Gastrocnemius medialis (tissue), 4 donors: ENCODE measurements at regions of chr22 and their contacts with region 1.

Region 1: GRCh38 chr22:50030297-50031188 is 18.0 kb upstream of the IL17REL start:
- DNase-seq: peak; percentile 22 to 54
- ATAC-seq: peak; percentile 77 to 86
- H3K4me3 ChIP-seq: no peak overlapping the region
- H3K27ac ChIP-seq: no peak overlapping the region
- H3K4me1 ChIP-seq: no peaks in the 10 kb centered on the region
- H3K27me3 ChIP-seq: peaks cover 5 to 35% (median 20%) of the 10 kb centered on the region in 3 donors
- CTCF ChIP-seq: peak; percentile 81 to 93 (median 92)
- POLR2A ChIP-seq: no peak

Region 2: GRCh38 chr22:49767355-49768062 is 263.0 kb before region 1 on chr22:
- in situ Hi-C with region 1: loop called in 3 of 4 experiments (anchors 25 kb)
- intact Hi-C with region 1: loop called (anchors 1 kb)
- DNase-seq: peak in 1 of 2 donors; percentile 25
- ATAC-seq: peak in 1 of 2 donors; percentile 50
- H3K4me3 ChIP-seq: no peak overlapping the region
- H3K27ac ChIP-seq: no peak overlapping the region
- H3K4me1 ChIP-seq: peaks cover 0 to 11% of the 10 kb centered on the region in 2 donors
- H3K27me3 ChIP-seq: no peaks in the 10 kb centered on the region
- CTCF ChIP-seq: peak; percentile 54 to 68 (median 66)
- POLR2A ChIP-seq: no peak

Region 3: GRCh38 chr22:49880281-49880680 is 150.3 kb before region 1 on chr22:
- in situ Hi-C with region 1: no loop called
- intact Hi-C with region 1: no loop called
- DNase-seq: no peak
- ATAC-seq: no peak
- H3K4me3 ChIP-seq: no peak overlapping the region
- H3K27ac ChIP-seq: no peak overlapping the region
- H3K4me1 ChIP-seq: no peaks in the 10 kb centered on the region
- H3K27me3 ChIP-seq: no peaks in the 10 kb centered on the region
- CTCF ChIP-seq: no peak
- POLR2A ChIP-seq: no peak

Region 4: DNA sequence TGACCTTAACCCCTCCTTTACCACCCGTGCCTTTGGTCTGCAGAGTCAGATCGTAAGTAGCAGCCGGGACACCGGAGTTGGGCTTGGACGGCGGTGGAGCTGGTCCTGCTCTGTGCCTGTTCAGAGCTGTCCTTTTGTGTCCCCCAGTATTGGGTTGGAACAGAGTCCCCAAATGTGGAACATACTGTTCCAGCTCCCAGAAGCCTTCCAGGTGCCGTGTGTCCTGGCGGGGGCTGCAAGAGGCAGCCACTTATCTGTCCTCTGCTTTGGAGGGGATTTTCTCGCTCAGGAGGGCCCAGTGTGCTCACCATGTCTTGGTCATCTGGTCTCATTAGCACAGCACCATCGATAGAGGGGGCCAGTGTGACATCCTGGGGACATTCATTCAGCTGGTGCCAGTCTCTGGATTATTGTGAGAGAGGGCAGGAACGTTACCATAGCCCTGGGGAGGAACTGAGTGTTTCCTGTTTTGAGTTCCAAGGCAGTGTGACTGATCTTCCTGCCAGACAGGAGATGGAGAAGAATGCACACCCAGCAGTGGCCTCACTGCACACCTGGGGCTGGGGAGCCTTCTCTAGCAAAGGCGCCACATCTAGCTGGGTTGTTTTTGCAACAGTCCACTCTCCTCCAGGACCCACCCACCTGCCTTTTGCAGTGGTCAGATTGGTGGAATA is 99.7 kb before region 1 on chr22:
- in situ Hi-C with region 1: loop called in 3 of 4 experiments (anchors 5 kb)
- intact Hi-C with region 1: loop called (anchors 1 kb)
- DNase-seq: peak; percentile 80 to 86
- ATAC-seq: peak; percentile 50 to 77
- H3K4me3 ChIP-seq: no peak overlapping the region
- H3K27ac ChIP-seq: peak overlapping the region; percentile 64 to 99 (median 96)
- H3K4me1 ChIP-seq: peaks cover 42 to 48% of the 10 kb centered on the region in 2 donors
- H3K27me3 ChIP-seq: peaks cover 0 to 7% (median 4%) of the 10 kb centered on the region in 3 donors
- CTCF ChIP-seq: peak; percentile 31 to 77 (median 65)
- POLR2A ChIP-seq: no peak

Region 5: GRCh38 chr22:49992921-49993648 is 37.5 kb before region 1 on chr22:
- in situ Hi-C with region 1: no loop called
- intact Hi-C with region 1: loop called (anchors 5 kb)
- DNase-seq: peak in 1 of 2 donors; percentile 62
- ATAC-seq: peak; percentile 87 to 92
- H3K4me3 ChIP-seq: no peak overlapping the region
- H3K27ac ChIP-seq: no peak overlapping the region
- H3K4me1 ChIP-seq: peaks cover 0 to 4% of the 10 kb centered on the region in 2 donors
- H3K27me3 ChIP-seq: no peaks in the 10 kb centered on the region
- CTCF ChIP-seq: peak; percentile 70 to 89 (median 85)
- POLR2A ChIP-seq: no peak